Endothelial cell of umbilical vein (primary cell): ENCODE measurements at regions of chr1 and their contacts with region 1.

Region 1: GRCh38 chr1:40691538-40692428 is at the start of gene NFYC:
- DNase-seq: peak; percentile 98
- H3K4me3 ChIP-seq: peak within 1 kb of the TSS; percentile 37 to 95 (median 78)
- H3K27ac ChIP-seq: peak within 1 kb of the TSS; percentile 68
- H3K4me1 ChIP-seq: peaks cover 19% of the 10 kb centered on the region
- H3K27me3 ChIP-seq: no peaks in the 10 kb centered on the region
- CTCF ChIP-seq: no peak
- POLR2A ChIP-seq: peak; percentile 76
- total RNA-seq, gene NFYC: 44.0 and 51.1 TPM in 2 replicates

Region 2: DNA sequence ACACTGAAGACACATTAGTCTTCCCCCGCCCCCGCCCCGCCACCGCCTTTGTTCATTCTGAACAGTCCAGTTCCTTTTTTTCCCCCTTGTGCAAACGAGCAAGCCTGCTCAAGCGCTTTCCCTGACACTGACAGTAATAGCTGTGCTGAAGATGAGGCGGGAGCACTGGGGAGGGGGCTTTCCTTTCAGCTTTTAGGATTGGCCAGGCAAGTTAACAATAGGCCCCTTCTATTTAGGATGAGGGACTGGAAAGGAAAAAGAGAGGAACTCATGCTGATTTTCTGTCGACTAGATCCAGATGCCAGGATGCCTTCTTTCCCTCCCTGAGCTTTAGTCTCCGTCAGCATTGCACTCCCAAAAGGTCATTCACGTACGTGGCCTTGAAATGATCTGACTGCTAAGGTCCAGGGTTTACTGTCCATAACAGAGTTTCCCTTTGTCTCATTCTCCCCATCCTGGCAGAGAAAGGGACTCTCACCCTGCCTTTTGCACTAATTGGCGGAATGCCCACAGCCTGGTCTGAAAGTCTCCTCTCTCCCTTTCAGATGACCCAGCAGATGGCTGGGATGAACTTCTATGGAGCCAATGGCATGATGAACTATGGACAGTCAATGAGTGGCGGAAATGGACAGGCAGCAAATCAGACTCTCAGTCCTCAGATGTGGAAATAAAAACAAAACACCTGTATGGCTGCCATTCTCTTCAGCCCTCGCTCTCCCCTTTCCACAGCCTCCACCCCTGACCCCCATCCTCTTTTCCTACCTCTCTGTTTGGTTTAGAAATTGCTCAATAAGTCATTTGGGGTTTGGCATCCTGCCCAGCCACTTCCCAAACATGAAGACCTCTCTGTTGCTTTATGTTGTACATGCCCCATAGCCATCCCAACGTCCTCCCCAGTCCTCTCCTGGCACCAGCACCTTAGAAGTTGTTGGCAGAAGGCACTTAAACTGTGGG is 270.1 kb before region 1 on chr1:
- CTCF ChIA-PET with region 1: no interaction called
- POLR2A ChIA-PET with region 1: no interaction called
- dilution Hi-C with region 1: no loop called
- intact Hi-C with region 1: no loop called
- DNase-seq: no peak
- H3K4me3 ChIP-seq: no peak overlapping the region
- H3K27ac ChIP-seq: no peak overlapping the region
- H3K4me1 ChIP-seq: no peaks in the 10 kb centered on the region
- H3K27me3 ChIP-seq: no peaks in the 10 kb centered on the region
- CTCF ChIP-seq: no peak
- POLR2A ChIP-seq: no peak

Region 3: GRCh38 chr1:40703316-40703715 is 11.5 kb after region 1 on chr1:
- CTCF ChIA-PET with region 1: interaction called, 18 read pairs
- POLR2A ChIA-PET with region 1: interaction called, 14 read pairs
- dilution Hi-C with region 1: no loop called
- intact Hi-C with region 1: no loop called
- DNase-seq: peak; percentile 20
- H3K4me3 ChIP-seq: no peak overlapping the region
- H3K27ac ChIP-seq: no peak overlapping the region
- H3K4me1 ChIP-seq: peaks cover 5% of the 10 kb centered on the region
- H3K27me3 ChIP-seq: no peaks in the 10 kb centered on the region
- CTCF ChIP-seq: no peak
- POLR2A ChIP-seq: no peak

Region 4: GRCh38 chr1:40709100-40709801 is 17.5 kb after region 1 on chr1:
- CTCF ChIA-PET with region 1: interaction called, 18 read pairs
- POLR2A ChIA-PET with region 1: interaction called, 5 read pairs
- dilution Hi-C with region 1: no loop called
- intact Hi-C with region 1: loop called (anchors 1 kb)
- DNase-seq: peak; percentile 95
- H3K4me3 ChIP-seq: peak overlapping the region; percentile 26 to 72 (median 46)
- H3K27ac ChIP-seq: peak overlapping the region; percentile 4
- H3K4me1 ChIP-seq: peaks cover 26% of the 10 kb centered on the region
- H3K27me3 ChIP-seq: no peaks in the 10 kb centered on the region
- CTCF ChIP-seq: no peak
- POLR2A ChIP-seq: peak; percentile 41